ENCODE measurements at regions of chr16 and their contacts with region 1.

Region 1: GRCh38 chr16:28211712-28212534 is at the start of gene XPO6:
- DNase-seq: peak; percentile 97
- H3K4me3 Mint-ChIP-seq: peak within 1 kb of the TSS; percentile 92
- H3K27ac Mint-ChIP-seq: peak within 1 kb of the TSS; percentile 96
- H3K4me1 Mint-ChIP-seq: peaks cover 36% of the 10 kb centered on the region
- H3K27me3 Mint-ChIP-seq: no peaks in the 10 kb centered on the region
- total RNA-seq, gene XPO6: 213 and 225 TPM in 2 replicates

Region 2: DNA sequence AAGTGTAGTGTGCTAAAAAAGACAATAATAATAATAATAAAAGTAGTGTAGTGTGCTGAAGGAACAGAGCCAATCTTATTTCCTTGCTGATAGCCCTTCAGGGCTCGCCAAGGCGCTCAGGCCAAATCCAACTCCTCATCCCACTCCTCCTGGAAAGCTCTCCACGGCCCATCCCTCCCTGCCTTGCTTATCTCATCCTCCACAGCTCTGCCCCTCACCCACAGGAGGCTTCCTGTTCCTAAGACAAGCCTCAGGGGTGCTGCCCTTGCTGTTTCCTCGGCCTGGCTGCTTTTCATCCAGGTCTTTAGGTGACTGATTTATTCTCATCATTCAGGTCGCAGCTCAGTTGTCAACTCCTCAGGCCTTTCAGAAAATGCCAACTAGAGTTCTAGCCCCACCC is 673.4 kb before region 1 on chr16:
- intact Hi-C with region 1: no loop called
- DNase-seq: no peak
- H3K4me3 Mint-ChIP-seq: no peak overlapping the region
- H3K27ac Mint-ChIP-seq: no peak overlapping the region
- H3K4me1 Mint-ChIP-seq: peaks cover 27% of the 10 kb centered on the region
- H3K27me3 Mint-ChIP-seq: no peaks in the 10 kb centered on the region

Region 3: GRCh38 chr16:28166394-28167208 is 45.3 kb before region 1 on chr16:
- intact Hi-C with region 1: loop called (anchors 1 kb)
- DNase-seq: no peak
- H3K4me3 Mint-ChIP-seq: peak overlapping the region; percentile 1
- H3K27ac Mint-ChIP-seq: peak overlapping the region; percentile 32
- H3K4me1 Mint-ChIP-seq: peaks cover 68% of the 10 kb centered on the region
- H3K27me3 Mint-ChIP-seq: no peaks in the 10 kb centered on the region

Region 4: DNA sequence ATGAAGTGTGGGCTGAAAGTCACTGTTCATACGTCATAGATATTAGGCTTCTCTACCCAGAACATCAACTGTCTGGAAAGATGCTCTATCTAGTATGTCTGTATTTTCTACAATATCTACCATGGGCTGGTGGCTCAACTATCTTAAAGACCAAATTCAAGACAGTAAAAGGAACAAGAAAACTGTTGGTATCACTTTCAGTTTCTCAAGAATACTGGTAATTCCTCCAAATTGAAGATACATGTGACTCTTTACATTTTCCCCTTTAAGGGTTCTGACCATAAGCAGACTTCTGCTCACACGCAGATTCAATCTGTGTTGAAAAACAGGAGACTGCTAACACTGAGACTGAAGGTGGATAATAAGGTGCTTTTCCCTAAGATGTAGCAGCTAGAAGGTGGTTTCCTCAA is 24.3 kb before region 1 on chr16:
- intact Hi-C with region 1: loop called (anchors 1 kb)
- DNase-seq: no peak
- H3K4me3 Mint-ChIP-seq: peak overlapping the region; percentile 54
- H3K27ac Mint-ChIP-seq: peak overlapping the region; percentile 88
- H3K4me1 Mint-ChIP-seq: peaks cover 93% of the 10 kb centered on the region
- H3K27me3 Mint-ChIP-seq: no peaks in the 10 kb centered on the region

Region 5: GRCh38 chr16:28193530-28194423 is 18.1 kb before region 1 on chr16:
- intact Hi-C with region 1: loop called (anchors 1 kb)
- DNase-seq: peak; percentile 35
- H3K4me3 Mint-ChIP-seq: peak overlapping the region; percentile 77
- H3K27ac Mint-ChIP-seq: peak overlapping the region; percentile 86
- H3K4me1 Mint-ChIP-seq: peaks cover 78% of the 10 kb centered on the region
- H3K27me3 Mint-ChIP-seq: no peaks in the 10 kb centered on the region

Region 6: DNA sequence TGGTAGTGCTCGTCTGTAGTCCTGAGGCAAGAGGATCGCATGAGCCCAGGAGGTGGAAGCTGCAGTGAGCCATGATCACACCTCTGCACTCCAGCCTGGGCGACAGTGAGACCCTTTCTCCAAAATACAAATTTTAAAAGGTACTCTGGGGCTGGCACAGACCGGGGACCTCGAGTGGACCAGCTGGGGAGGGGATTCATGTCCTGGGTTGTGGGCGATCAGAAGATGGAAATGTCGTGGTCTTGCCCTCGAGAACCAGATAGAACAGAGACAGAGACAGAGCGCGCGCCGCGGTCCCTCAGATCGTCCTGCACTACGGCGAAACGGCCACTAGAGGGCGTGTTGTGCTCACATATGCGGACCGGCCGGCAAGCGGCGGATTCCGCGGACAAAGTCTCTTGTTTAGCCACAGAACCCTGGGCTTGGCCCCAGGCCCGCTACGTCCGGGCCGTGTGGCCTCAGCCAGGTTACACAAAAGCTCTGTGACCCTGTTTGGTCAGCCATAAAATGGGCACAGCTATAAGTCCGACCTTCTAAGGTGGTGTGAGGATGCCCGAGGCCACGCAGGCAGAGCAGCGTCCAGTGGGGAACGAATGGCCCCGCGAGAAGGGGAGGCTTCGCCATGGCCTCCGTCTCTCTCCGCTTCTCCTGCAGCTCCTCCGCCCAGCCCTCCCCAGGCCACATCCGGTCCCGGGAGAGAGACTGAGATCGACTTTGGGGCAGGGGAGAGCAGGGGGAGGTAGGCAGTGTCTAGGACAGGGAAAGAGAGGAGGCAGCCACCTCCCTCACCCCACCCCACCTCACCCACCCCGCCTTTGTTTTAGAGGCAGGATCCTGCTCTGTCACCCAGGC is 65.8 kb after region 1 on chr16:
- intact Hi-C with region 1: loop called (anchors 1 kb)
- DNase-seq: peak; percentile 76
- H3K4me3 Mint-ChIP-seq: peak overlapping the region; percentile 72
- H3K27ac Mint-ChIP-seq: no peak overlapping the region
- H3K4me1 Mint-ChIP-seq: peaks cover 34% of the 10 kb centered on the region
- H3K27me3 Mint-ChIP-seq: peaks cover 19% of the 10 kb centered on the region

Region 7: GRCh38 chr16:28291873-28292660 is 80.1 kb after region 1 on chr16 and contains the start of gene SBK1:
- intact Hi-C with region 1: loop called (anchors 1 kb)
- DNase-seq: peak; percentile 83
- H3K4me3 Mint-ChIP-seq: peak within 1 kb of the TSS; percentile 89
- H3K27ac Mint-ChIP-seq: peak within 1 kb of the TSS; percentile 73
- H3K4me1 Mint-ChIP-seq: peaks cover 34% of the 10 kb centered on the region
- H3K27me3 Mint-ChIP-seq: peaks cover 19% of the 10 kb centered on the region
- total RNA-seq, gene SBK1: 0.73 and 0.80 TPM in 2 replicates

Region 8: GRCh38 chr16:28491970-28492474 is 280.1 kb after region 1 on chr16 and contains the start of gene CLN3:
- intact Hi-C with region 1: loop called (anchors 1 kb)
- DNase-seq: peak; percentile 84
- H3K4me3 Mint-ChIP-seq: peak within 1 kb of the TSS; percentile 89
- H3K27ac Mint-ChIP-seq: peak within 1 kb of the TSS; percentile 100
- H3K4me1 Mint-ChIP-seq: peaks cover 62% of the 10 kb centered on the region
- H3K27me3 Mint-ChIP-seq: no peaks in the 10 kb centered on the region
- total RNA-seq, gene CLN3: 27.1 and 28.5 TPM in 2 replicates